ENCODE measurements at regions of chr9 and their contacts with region 1.

Region 1: GRCh38 chr9:35116898-35117551 is 1.4 kb upstream of the ATOSB start:
- DNase-seq: peak; percentile 73
- ATAC-seq: peak; percentile 46
- H3K4me3 Mint-ChIP-seq: peak overlapping the region; percentile 100
- H3K27ac Mint-ChIP-seq: peak overlapping the region; percentile 98
- H3K4me1 Mint-ChIP-seq: peaks cover 33% of the 10 kb centered on the region
- H3K27me3 Mint-ChIP-seq: peaks cover 5% of the 10 kb centered on the region

Region 2: GRCh38 chr9:35102926-35103659 is 13.9 kb before region 1 on chr9 and contains the start of gene STOML2:
- POLR2A ChIA-PET with region 1: interaction called, 47 read pairs
- DNase-seq: peak; percentile 85
- ATAC-seq: peak; percentile 96
- H3K4me3 Mint-ChIP-seq: peak within 1 kb of the TSS; percentile 81
- H3K27ac Mint-ChIP-seq: peak within 1 kb of the TSS; percentile 95
- H3K4me1 Mint-ChIP-seq: peaks cover 31% of the 10 kb centered on the region
- H3K27me3 Mint-ChIP-seq: no peaks in the 10 kb centered on the region
- total RNA-seq, gene STOML2: 90.3 to 91.9 TPM

Measured in activated naive CD8-positive, alpha-beta T cell treated with anti-CD3 and anti-CD28 coated beads, Interleukin-2, amount 10 ng/mL, durations not matched to agents 7 days and 5 days (primary cell).